ENCODE measurements at regions of chr3 and their contacts with region 1.

Region 1: DNA sequence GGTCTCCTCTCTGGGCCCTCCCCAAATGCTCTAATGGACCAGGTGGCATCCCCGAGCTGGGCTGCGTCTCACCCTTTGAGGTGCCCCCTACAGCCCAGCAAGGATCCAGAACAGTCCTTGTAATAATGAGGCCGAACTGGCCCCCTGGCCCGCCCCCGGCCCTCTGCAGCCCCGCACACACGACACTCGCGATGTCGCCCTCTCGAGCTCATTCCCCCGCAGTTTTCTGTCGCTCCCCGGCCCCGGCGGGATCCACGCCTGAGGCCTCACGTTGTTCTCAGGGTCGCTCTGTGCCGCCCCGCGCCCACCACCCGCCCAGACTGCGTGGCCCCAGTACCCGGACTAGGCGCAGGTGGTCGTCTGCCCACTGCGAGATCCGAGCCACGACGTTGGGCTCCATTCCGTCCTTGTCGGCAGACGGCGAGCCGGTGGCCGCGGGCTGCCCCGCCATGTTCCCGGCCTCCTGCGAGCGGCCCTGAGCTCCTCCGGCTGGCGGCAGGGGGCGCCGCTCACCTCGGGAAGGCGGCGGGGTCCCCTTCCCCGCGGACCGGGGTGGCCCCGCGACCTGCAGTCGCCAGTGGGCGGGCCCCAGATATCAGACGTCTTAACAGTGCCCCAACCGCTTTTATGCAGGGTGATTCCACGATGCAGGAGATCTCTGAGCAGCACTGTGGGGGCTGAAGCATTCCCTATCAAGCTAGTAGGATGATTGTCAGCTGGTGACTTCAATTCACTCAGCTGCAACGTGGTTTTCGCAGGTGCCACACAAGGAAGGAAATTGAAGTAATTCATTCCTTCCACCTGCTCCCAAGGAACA is at the start of gene C3orf33:
- DNase-seq: peak; percentile 41
- ATAC-seq: peak; percentile 91
- H3K4me3 ChIP-seq: peak within 1 kb of the TSS; percentile 74 to 95
- H3K27ac ChIP-seq: peak within 1 kb of the TSS; percentile 84
- H3K4me1 ChIP-seq: peaks cover 7 to 14% of the 10 kb centered on the region in 2 experiments; a peak in 3 of 4 replicates
- H3K27me3 ChIP-seq: no peaks in the 10 kb centered on the region
- CTCF ChIP-seq: peak; percentile 57 to 85 (median 78)
- POLR2A ChIP-seq: no peak
- RAD21 ChIP-seq: peak; percentile 76
- total RNA-seq, gene C3orf33: 4.7 TPM

Region 2: GRCh38 chr3:155676252-155676981 is 129.6 kb before region 1 on chr3:
- CTCF ChIA-PET with region 1: no interaction called
- POLR2A ChIA-PET with region 1: no interaction called
- RAD21 ChIA-PET with region 1: no interaction called
- intact Hi-C with region 1: no loop called
- DNase-seq: no peak
- ATAC-seq: no peak
- H3K4me3 ChIP-seq: no peak overlapping the region
- H3K27ac ChIP-seq: no peak overlapping the region
- H3K4me1 ChIP-seq: no peaks in the 10 kb centered on the region
- H3K27me3 ChIP-seq: no peaks in the 10 kb centered on the region
- CTCF ChIP-seq: no peak
- POLR2A ChIP-seq: no peak
- RAD21 ChIP-seq: no peak

Region 3: GRCh38 chr3:155791190-155791589 is 14.8 kb before region 1 on chr3:
- CTCF ChIA-PET with region 1: interaction called, 14 read pairs
- POLR2A ChIA-PET with region 1: interaction called, 5 read pairs
- RAD21 ChIA-PET with region 1: interaction called in 1 of 2 experiments, 3 read pairs
- intact Hi-C with region 1: no loop called
- DNase-seq: no peak
- ATAC-seq: no peak
- H3K4me3 ChIP-seq: no peak overlapping the region
- H3K27ac ChIP-seq: no peak overlapping the region
- H3K4me1 ChIP-seq: peaks cover 0 to 3% of the 10 kb centered on the region in 2 experiments; a peak in 1 of 4 replicates
- H3K27me3 ChIP-seq: no peaks in the 10 kb centered on the region
- CTCF ChIP-seq: no peak
- POLR2A ChIP-seq: no peak
- RAD21 ChIP-seq: no peak

Region 4: DNA sequence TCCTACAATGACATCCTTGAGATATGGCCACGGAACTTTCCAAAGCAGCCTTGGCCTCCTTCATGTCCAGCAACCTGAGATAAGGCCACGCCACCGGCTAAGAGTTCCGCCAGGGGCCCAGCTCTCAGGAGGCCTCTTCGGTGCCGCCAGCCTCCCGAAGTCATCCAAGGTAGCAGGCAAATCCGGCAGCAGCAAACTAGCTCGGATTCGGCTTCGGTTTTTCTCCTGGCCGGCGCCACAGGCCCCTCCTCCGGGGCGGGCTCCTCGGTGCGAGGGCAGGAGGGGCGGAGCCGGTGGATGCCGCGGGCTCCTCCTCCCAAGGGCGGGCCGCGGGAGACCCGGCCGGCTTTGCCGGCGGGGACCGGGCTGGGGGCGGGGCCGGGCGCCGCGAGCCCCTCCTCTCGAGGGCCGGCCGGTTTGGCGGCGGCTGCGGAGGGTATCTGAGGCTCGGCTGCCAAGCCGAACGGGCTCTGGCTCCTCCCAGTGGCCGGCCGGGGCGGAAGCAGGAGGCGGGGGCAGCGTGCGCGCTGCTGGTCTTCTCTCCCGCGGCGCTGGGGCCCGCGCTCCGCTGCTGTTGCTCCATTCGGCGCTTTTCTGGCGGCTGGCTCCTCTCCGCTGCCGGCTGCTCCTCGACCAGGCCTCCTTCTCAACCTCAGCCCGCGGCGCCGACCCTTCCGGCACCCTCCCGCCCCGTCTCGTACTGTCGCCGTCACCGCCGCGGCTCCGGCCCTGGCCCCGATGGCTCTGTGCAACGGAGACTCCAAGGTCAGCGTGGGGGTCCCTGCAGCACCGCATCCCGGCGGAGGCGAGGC is 64.3 kb after region 1 on chr3 and contains the start of gene GMPS:
- CTCF ChIA-PET with region 1: interaction called, 11 read pairs
- POLR2A ChIA-PET with region 1: interaction called, 5 read pairs
- RAD21 ChIA-PET with region 1: no interaction called
- intact Hi-C with region 1: no loop called
- DNase-seq: peak; percentile 76
- ATAC-seq: peak; percentile 89
- H3K4me3 ChIP-seq: peak within 1 kb of the TSS; percentile 87 to 98
- H3K27ac ChIP-seq: peak within 1 kb of the TSS; percentile 90
- H3K4me1 ChIP-seq: peaks cover 0 to 25% of the 10 kb centered on the region in 2 experiments; a peak in 3 of 4 replicates
- H3K27me3 ChIP-seq: no peaks in the 10 kb centered on the region
- CTCF ChIP-seq: peak; percentile 5 to 26 (median 22); a peak in 1 of 6 replicates
- POLR2A ChIP-seq: peak; percentile 37
- RAD21 ChIP-seq: peak; percentile 67
- total RNA-seq, gene GMPS: 119 TPM

Measured in HCT116 (cell line).